Panc1 (cell line): ENCODE measurements at regions of chr2 and their contacts with region 1.

Region 1: DNA sequence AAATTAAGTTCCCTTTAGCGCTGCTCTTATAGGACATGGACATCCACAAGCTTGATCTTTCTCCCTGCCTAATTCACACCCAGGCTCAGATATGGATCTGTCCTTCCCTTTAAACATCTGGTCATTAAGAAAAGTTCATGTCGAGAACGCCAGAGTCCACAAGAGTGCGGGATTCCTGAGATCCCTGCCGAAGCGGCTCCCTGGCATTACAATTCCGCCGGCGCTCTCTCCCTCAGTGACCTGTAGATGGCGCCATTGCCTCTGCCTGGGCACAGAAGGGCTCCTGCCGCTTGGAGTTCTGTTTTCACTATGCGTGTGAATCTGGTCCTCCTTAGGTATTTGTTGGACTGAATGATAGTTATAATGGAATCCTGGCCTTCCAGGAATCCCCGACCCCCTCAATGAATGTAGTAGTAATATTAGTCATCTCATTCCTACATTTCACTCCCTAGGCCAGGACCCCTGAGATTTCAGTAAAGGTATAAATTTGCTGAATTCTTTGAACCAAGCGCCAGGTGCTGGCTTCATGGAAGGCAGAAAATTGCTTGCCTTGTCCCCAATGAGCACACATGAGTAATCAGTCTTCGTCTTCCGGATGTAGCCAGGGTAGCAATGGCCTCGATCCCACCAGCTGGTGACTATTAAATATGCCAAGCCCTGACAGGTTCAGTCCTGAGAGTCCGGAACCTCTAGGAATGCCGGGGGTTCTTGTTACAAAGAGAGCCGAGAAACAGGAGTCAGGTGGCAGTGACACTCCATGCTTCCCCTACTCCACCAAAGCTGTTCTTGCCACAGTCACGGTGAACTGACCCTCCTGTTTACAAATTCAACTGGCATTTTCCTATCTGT is 26.4 kb upstream of the CD207 start:
- DNase-seq: peak; percentile 48
- ATAC-seq: peak; percentile 93
- H3K4me3 ChIP-seq: no peak overlapping the region
- H3K27ac ChIP-seq: no peak overlapping the region
- H3K4me1 ChIP-seq: no peaks in the 10 kb centered on the region
- H3K27me3 ChIP-seq: peaks cover 15% of the 10 kb centered on the region
- CTCF ChIP-seq: peak; percentile 99

Region 2: DNA sequence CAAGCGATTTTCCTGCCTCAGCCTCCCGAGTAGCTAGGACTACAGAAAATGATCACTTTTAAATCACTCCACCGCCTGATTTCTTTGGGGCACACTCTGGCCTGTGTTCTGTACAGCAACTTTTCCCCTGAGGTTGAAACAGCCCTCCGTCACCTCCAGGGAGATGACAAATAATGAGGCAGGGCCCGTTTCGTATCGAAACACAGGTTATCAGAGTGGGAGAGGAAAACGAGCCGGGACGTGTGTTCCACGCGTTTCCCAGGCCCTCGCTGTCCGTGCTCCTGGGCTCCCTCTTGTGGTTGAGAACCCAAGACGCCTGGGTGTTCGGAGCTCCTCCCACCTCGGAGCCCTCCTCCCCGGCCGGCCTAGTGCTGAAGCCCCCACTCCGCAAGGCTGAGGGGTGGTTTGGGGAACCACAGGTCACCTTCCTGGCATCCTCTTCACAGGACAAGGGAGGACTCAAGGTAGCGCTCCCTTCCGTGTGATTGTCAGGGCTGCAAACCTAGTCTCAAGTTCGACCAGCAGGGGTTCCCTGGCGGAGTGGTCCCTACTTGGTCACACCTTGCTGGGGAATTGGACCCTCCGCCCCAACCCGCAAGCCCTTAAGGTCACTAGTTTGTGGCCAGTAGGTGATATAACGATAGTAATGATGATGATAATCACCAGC is 86.5 kb after region 1 on chr2:
- CTCF ChIA-PET with region 1: interaction called, 4 read pairs
- POLR2A ChIA-PET with region 1: no interaction called
- in situ Hi-C with region 1: no loop called
- intact Hi-C with region 1: loop called (anchors 2 kb)
- DNase-seq: peak; percentile 63
- ATAC-seq: peak; percentile 96
- H3K4me3 ChIP-seq: peak overlapping the region; percentile 16 to 43
- H3K27ac ChIP-seq: no peak overlapping the region
- H3K4me1 ChIP-seq: no peaks in the 10 kb centered on the region; the same call in 1 of the 2 replicates
- H3K27me3 ChIP-seq: peaks cover 5% of the 10 kb centered on the region
- CTCF ChIP-seq: peak; percentile 97

Region 3: GRCh38 chr2:71154798-71155197 is 292.8 kb after region 1 on chr2:
- CTCF ChIA-PET with region 1: no interaction called
- POLR2A ChIA-PET with region 1: no interaction called
- in situ Hi-C with region 1: no loop called
- intact Hi-C with region 1: no loop called
- DNase-seq: peak; percentile 20
- ATAC-seq: peak; percentile 62
- H3K4me3 ChIP-seq: no peak overlapping the region
- H3K27ac ChIP-seq: no peak overlapping the region
- H3K4me1 ChIP-seq: no peaks in the 10 kb centered on the region
- H3K27me3 ChIP-seq: peaks cover 2% of the 10 kb centered on the region; the same call in 1 of the 2 replicates
- CTCF ChIP-seq: peak; percentile 37